ENCODE measurements at regions of chr11 and their contacts with region 1.

Region 1: GRCh38 chr11:13276832-13277767 is 490 bp upstream of the BMAL1 start:
- DNase-seq: peak; percentile 86 to 96
- H3K4me3 ChIP-seq: peak overlapping the region; percentile 88
- H3K27ac ChIP-seq: no peak overlapping the region
- H3K4me1 ChIP-seq: peaks cover 12% of the 10 kb centered on the region
- H3K27me3 ChIP-seq: peaks cover 6% of the 10 kb centered on the region; the same call in 1 of the 2 replicates
- CTCF ChIP-seq: no peak

Region 2: DNA sequence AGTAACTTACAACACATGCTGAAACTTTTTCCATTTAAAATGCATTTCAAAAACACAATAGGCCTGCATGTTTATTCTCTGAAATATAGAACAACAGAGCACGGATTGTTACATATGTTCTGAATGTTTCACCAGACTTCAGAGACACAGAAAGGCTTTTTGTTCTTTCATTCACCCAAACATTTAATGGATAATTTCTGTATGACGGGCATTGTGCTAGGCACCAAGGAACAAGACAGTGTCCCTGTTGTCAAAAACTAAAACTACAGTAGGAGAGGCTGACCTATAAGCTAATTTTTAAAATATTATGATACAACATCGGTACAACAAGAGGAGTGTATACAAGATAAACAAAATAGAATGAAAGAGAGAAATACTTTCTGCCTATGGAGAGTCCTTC is 684.8 kb before region 1 on chr11:
- CTCF ChIA-PET with region 1: no interaction called
- POLR2A ChIA-PET with region 1: no interaction called
- intact Hi-C with region 1: no loop called
- DNase-seq: no peak
- H3K4me3 ChIP-seq: no peak overlapping the region
- H3K27ac ChIP-seq: no peak overlapping the region
- H3K4me1 ChIP-seq: peaks cover 7% of the 10 kb centered on the region; the same call in 1 of the 2 replicates
- H3K27me3 ChIP-seq: no peaks in the 10 kb centered on the region
- CTCF ChIP-seq: no peak

Region 3: DNA sequence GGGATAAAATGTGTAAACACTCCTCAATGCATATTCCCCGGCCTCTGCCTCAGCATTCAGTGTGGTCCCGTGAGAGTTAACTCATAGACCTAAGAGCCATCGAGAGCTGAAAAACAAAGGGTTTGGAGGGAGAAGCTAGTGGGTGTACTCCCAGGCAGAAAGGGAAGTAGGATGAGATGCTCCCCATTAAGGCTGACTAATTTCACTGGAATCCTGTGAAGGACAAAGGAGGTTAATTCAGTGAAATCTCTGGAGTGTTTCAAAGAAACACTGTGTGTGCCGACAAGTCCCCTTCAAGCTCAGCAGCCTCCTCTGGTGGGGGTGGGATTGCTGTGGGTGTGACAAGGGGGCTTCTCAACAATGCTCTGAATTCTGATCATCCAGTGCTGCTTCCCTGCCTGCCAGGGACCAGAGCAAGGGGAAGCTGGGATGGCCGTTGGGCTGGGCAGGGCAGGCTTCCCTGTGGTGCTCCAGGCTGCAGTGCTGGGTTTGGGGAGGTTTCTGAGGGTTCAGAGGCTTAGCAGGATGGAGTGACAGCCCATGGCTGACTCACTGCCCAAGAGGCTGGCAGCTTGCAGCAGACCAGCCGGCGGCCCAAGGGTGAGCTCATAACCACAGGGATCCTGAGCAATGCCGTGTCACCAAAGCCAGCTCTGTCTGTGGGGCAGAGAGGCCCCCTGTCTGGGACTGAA is 60.9 kb before region 1 on chr11:
- CTCF ChIA-PET with region 1: no interaction called
- POLR2A ChIA-PET with region 1: no interaction called
- intact Hi-C with region 1: loop called (anchors 2 kb)
- DNase-seq: peak; percentile 80 to 89
- H3K4me3 ChIP-seq: peak overlapping the region; percentile 16; the same call in 1 of the 2 replicates
- H3K27ac ChIP-seq: peak overlapping the region; percentile 91
- H3K4me1 ChIP-seq: peaks cover 50% of the 10 kb centered on the region
- H3K27me3 ChIP-seq: no peaks in the 10 kb centered on the region
- CTCF ChIP-seq: no peak

Region 4: DNA sequence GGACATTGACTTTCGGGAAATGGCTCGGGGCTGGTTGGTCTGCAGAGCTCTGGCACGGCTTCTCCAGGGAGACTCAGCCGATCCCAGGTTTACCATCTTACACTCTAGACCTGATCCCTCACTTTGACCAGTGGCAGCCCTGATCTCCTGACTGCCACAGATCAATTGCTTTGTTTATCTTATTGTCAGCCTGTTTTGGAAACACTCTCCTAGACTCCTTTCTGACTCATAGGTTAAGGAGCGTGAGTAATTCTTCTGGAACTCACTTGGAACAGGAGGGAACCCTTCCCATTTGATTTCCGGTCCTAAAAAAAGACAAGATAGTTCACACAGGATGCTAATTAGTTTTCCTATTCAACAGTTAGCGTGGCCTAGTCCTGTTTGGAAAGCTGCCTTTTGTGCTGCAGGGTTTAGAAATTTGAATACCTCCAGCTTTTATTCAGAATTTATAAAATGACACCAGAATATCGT is 15.5 kb before region 1 on chr11:
- CTCF ChIA-PET with region 1: interaction called, 3 read pairs
- POLR2A ChIA-PET with region 1: no interaction called
- intact Hi-C with region 1: loop called (anchors 1 kb)
- DNase-seq: peak in 1 of 2 experiments; percentile 81
- H3K4me3 ChIP-seq: no peak overlapping the region
- H3K27ac ChIP-seq: peak overlapping the region; percentile 75
- H3K4me1 ChIP-seq: peaks cover 37% of the 10 kb centered on the region
- H3K27me3 ChIP-seq: no peaks in the 10 kb centered on the region
- CTCF ChIP-seq: no peak

Region 5: DNA sequence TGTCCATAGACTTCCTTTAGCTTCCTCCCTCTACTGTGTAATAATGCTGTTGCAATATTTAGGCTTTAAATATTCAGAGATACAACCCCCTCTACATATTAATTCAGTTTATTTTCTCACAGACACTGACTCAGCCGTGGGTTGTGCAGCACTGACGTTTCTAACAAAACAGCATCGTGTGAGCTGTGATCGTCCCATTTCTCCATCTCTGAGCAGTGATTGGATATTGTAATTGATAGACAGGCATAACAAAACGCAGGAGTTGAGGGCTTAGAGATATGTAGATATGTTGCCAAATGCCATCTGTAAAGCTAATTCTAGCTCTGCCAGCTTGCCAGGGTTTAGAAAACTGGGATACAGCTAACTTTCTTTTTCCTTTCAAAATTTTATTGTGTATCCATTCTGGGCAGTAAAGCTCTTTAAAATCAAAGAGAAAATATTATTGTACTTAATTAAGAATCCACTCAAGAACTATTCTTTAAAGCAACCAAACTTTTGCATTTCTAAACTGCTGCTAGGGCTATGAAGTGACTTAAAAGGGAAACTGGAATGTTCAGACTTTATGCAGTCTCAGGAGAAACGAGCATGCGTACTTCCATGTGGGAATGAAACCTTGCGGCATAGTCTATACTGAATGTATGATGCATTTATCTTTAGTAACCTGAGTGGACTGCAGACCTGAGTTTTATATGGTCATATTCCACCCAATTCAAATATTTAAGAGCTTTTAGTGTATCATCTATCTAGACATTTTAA is 163.2 kb after region 1 on chr11:
- CTCF ChIA-PET with region 1: no interaction called
- POLR2A ChIA-PET with region 1: no interaction called
- intact Hi-C with region 1: no loop called
- DNase-seq: no peak
- H3K4me3 ChIP-seq: no peak overlapping the region
- H3K27ac ChIP-seq: no peak overlapping the region
- H3K4me1 ChIP-seq: no peaks in the 10 kb centered on the region
- H3K27me3 ChIP-seq: no peaks in the 10 kb centered on the region
- CTCF ChIP-seq: no peak

Measured in PC-9 (cell line).